Mammary epithelial cell (primary cell): ENCODE measurements at regions of chr7 and their contacts with region 1.

Region 1: GRCh38 chr7:48411619-48412018 is 240.4 kb downstream of the ABCA13 start:
- DNase-seq: no peak
- H3K4me3 ChIP-seq: no peak overlapping the region
- H3K27ac ChIP-seq: no peak overlapping the region
- H3K4me1 ChIP-seq: peaks cover 13% of the 10 kb centered on the region
- H3K27me3 ChIP-seq: no peaks in the 10 kb centered on the region
- CTCF ChIP-seq: no peak

Region 2: GRCh38 chr7:48365010-48365409 is 46.6 kb before region 1 on chr7:
- CTCF ChIA-PET with region 1: no interaction called
- dilution Hi-C with region 1: loop called (anchors 5 kb)
- in situ Hi-C with region 1: no loop called
- intact Hi-C with region 1: no loop called
- DNase-seq: peak; percentile 67
- H3K4me3 ChIP-seq: no peak overlapping the region
- H3K27ac ChIP-seq: no peak overlapping the region
- H3K4me1 ChIP-seq: peaks cover 18% of the 10 kb centered on the region
- H3K27me3 ChIP-seq: no peaks in the 10 kb centered on the region
- CTCF ChIP-seq: no peak